ENCODE measurements at regions of chr7 and their contacts with region 1.

Region 1: DNA sequence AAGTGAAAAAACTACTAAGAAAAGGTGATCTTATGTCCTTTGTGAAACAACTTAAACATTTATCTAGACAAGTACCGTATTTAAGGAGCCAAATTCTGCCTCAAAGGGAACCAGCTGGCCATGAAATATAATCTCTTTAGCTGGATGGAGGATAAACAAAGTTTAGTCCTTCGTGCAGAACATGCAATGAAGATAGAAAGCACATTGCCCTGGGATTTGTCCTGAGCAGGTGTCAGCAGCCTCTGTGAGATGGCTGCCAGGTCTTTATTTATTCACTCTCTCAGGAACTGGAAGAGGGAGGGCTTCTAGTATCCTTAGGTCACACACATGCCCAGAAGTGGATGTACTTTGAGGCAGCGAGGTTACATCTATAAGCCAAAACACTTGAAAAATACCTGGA is 57.4 kb upstream of the CASD1 start:
- DNase-seq: no peak
- H3K4me3 ChIP-seq: no peak overlapping the region
- H3K27ac ChIP-seq: no peak overlapping the region
- H3K4me1 ChIP-seq: peaks cover 0 to 3% (median 0%) of the 10 kb centered on the region in 6 donors
- H3K27me3 ChIP-seq: no peaks in the 10 kb centered on the region
- CTCF ChIP-seq: no peak
- POLR2A ChIP-seq: no peak

Region 2: GRCh38 chr7:94630855-94631254 is 178.6 kb after region 1 on chr7:
- intact Hi-C with region 1: no loop called
- DNase-seq: no peak
- H3K4me3 ChIP-seq: no peak overlapping the region
- H3K27ac ChIP-seq: no peak overlapping the region
- H3K4me1 ChIP-seq: no peaks in the 10 kb centered on the region
- H3K27me3 ChIP-seq: no peaks in the 10 kb centered on the region
- CTCF ChIP-seq: no peak
- POLR2A ChIP-seq: no peak

Region 3: DNA sequence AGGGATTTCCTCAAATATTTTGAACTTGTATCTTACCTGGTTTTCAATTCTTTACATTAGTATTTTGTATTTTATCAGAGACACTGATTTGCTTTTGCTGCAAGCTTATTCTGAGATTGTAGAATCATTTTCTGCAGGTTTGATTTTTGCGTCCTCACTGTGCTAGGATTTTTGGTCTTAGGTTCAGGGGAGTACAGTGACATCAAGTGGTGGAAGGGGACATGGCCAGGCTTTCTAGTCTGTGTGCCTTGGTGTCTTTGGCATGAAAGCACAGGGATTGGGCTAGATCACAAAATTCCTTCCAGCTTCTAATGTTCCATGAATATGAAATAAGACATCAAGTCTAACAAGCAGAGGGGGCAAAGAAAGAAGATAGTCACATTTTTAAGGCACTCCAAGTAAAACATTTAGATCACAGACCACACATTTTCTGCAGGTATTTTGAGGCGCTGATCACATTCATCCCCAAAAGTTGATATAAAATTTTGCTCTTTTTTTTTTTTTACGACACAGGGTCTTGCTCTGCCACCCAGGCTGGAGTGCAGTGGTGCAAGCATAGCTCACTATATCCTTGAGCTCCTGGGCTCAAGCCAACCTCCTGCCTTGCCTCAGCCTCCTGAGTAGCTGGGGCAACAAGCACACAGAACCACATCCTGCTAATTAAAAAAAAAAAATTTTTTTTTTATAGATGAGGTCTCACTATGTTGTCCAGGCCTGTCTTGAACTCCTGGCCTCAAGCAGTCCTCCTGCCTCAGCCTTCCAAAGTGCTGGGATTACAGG is 747.7 kb after region 1 on chr7:
- intact Hi-C with region 1: loop called (anchors 10 kb)
- DNase-seq: no peak
- H3K4me3 ChIP-seq: no peak overlapping the region
- H3K27ac ChIP-seq: no peak overlapping the region
- H3K4me1 ChIP-seq: no peaks in the 10 kb centered on the region
- H3K27me3 ChIP-seq: no peaks in the 10 kb centered on the region
- CTCF ChIP-seq: peak in 8 of 11 experiments; percentile 33 to 67 (median 58)
- POLR2A ChIP-seq: no peak

Region 4: DNA sequence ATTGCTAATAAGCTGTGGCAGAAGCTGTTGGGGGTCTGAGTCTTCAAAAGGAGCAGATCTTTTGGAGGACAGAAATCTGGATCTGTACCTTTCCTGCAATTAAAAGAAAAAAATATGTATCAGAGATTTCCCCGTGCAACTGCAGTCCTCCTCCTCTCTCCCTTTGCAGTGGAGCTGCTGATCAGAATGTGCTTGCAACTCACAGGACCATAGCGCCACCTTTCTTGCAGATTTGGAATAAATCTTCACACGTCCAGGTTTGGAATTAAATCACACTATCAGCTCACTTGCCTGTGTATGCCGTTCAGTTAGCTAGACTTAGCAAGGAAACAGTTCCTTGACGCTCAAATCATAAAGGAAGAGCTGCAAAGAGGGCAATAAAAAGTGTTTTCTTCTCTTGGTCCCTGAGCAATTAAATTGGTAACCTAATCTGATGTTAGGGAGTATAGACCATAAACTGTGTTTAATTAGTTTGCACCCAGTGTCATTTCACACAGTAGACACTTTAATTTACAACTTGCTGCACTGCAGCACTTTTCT is 794.7 kb after region 1 on chr7:
- intact Hi-C with region 1: loop called (anchors 5 kb)
- DNase-seq: no peak
- H3K4me3 ChIP-seq: no peak overlapping the region
- H3K27ac ChIP-seq: no peak overlapping the region
- H3K4me1 ChIP-seq: no peaks in the 10 kb centered on the region
- H3K27me3 ChIP-seq: no peaks in the 10 kb centered on the region
- CTCF ChIP-seq: peak in 10 of 11 experiments; percentile 6 to 72 (median 52)
- POLR2A ChIP-seq: no peak

Region 5: DNA sequence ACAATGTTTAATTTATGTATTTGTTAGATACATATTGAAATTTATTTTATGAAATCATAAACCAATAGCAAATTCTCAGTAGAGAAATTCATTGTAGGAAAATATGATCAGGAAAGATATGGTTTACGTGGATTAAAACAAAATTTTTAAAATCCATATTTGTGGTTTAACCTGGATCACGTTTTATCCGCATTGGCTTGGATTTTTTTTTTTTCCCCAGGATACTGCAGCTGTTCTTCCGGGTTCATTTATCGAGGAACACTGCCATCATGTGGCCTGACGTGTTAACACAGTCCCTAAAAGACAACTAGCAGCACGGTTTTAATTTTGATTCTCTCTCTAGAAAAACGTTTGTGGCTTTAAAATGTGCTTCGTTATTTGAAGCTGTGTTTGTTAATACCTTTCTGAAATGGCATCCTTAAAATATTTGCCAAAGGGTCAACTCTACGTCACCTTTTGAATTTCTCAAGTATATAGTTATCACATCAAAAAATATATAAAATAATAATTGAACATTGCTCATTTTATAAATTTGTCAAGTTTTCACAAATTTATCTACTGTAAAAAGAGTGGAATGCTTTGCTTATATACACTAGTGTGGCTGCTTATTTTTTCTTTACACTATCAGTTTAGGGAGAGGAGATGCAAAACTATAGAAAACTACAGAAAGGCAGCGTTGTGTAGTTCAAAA is 1024.8 kb after region 1 on chr7:
- intact Hi-C with region 1: loop called (anchors 5 kb)
- DNase-seq: no peak
- H3K4me3 ChIP-seq: no peak overlapping the region
- H3K27ac ChIP-seq: no peak overlapping the region
- H3K4me1 ChIP-seq: peaks cover 0 to 10% (median 0%) of the 10 kb centered on the region in 6 donors
- H3K27me3 ChIP-seq: no peaks in the 10 kb centered on the region
- CTCF ChIP-seq: peak; percentile 60 to 85 (median 76)
- POLR2A ChIP-seq: no peak